ENCODE measurements at regions of chr7 and their contacts with region 1.

Region 1: GRCh38 chr7:107743567-107744344 is at the start of gene CBLL1:
- DNase-seq: peak; percentile 91
- ATAC-seq: peak; percentile 97
- H3K4me3 ChIP-seq: peak within 1 kb of the TSS; percentile 86 to 92 (median 87)
- H3K27ac ChIP-seq: peak within 1 kb of the TSS; percentile 98
- H3K4me1 ChIP-seq: peaks cover 37% of the 10 kb centered on the region
- H3K27me3 ChIP-seq: no peaks in the 10 kb centered on the region; a peak in 1 of 5 replicates
- CTCF ChIP-seq: peak; percentile 95
- EP300 ChIP-seq: no peak
- POLR2A ChIP-seq: peak; percentile 83
- RAD21 ChIP-seq: peak; percentile 95
- total RNA-seq, gene CBLL1: 10.5 and 12.2 TPM in 2 replicates

Region 2: GRCh38 chr7:107551936-107552335 is 191.8 kb before region 1 on chr7:
- CTCF ChIA-PET with region 1: no interaction called
- POLR2A ChIA-PET with region 1: no interaction called
- in situ Hi-C with region 1: no loop called
- intact Hi-C with region 1: no loop called
- DNase-seq: no peak
- ATAC-seq: no peak
- H3K4me3 ChIP-seq: no peak overlapping the region
- H3K27ac ChIP-seq: no peak overlapping the region
- H3K4me1 ChIP-seq: no peaks in the 10 kb centered on the region
- H3K27me3 ChIP-seq: no peaks in the 10 kb centered on the region
- CTCF ChIP-seq: no peak
- EP300 ChIP-seq: no peak
- POLR2A ChIP-seq: no peak
- RAD21 ChIP-seq: no peak

Region 3: GRCh38 chr7:107643407-107643806 is 100.3 kb before region 1 on chr7:
- CTCF ChIA-PET with region 1: no interaction called
- POLR2A ChIA-PET with region 1: no interaction called
- in situ Hi-C with region 1: no loop called
- intact Hi-C with region 1: no loop called
- DNase-seq: no peak
- ATAC-seq: no peak
- H3K4me3 ChIP-seq: no peak overlapping the region
- H3K27ac ChIP-seq: no peak overlapping the region
- H3K4me1 ChIP-seq: no peaks in the 10 kb centered on the region
- H3K27me3 ChIP-seq: peaks cover 0 to 4% of the 10 kb centered on the region in 2 experiments; a peak in 1 of 5 replicates
- CTCF ChIP-seq: no peak
- EP300 ChIP-seq: no peak
- POLR2A ChIP-seq: no peak
- RAD21 ChIP-seq: no peak

Region 4: GRCh38 chr7:107779647-107780099 is 35.9 kb after region 1 on chr7:
- CTCF ChIA-PET with region 1: no interaction called
- POLR2A ChIA-PET with region 1: interaction called, 8 read pairs
- in situ Hi-C with region 1: no loop called
- intact Hi-C with region 1: loop called (anchors 1 kb)
- DNase-seq: peak; percentile 96
- ATAC-seq: peak; percentile 99
- H3K4me3 ChIP-seq: no peak overlapping the region; a peak in 1 of 6 replicates
- H3K27ac ChIP-seq: peak overlapping the region; percentile 85
- H3K4me1 ChIP-seq: peaks cover 78% of the 10 kb centered on the region
- H3K27me3 ChIP-seq: no peaks in the 10 kb centered on the region
- CTCF ChIP-seq: no peak; the same call in 1 of the 2 replicates
- EP300 ChIP-seq: peak; percentile 66 to 98
- POLR2A ChIP-seq: peak in 1 of 2 experiments; percentile 28; a peak in 1 of 4 replicates
- RAD21 ChIP-seq: 0 out of 2 replicates have a peak, but pooled peaks have one; percentile 10

Region 5: DNA sequence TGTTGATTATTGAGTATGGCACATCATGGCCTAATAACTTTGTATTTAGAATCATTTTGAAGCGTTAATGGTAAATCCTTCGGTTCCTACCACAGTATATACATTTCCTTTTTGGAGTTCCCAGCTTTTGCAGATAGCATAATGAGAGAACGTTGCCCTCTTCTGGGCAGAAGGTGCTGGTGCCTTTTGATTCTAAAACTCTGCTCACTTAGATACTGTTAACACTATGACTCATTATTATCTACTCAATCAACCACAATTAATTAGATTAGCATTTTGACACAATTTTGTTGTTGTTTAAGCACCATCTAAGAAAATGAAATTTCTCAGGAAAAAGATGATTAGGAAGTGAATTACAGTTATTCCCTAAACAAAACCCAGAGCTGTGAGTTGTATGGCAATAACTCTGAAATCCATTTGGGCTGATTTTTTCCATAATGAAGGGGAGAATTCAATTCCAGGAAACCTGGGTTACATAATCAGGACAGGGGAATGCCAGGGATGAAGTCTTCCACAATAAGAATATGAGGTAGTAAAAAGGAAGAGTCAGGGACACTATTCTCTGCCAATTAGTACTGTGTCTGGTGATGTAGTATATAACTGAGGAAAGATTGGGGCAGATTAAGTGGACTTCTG is 135.8 kb after region 1 on chr7:
- CTCF ChIA-PET with region 1: interaction called, 30 read pairs
- POLR2A ChIA-PET with region 1: interaction called, 30 read pairs
- in situ Hi-C with region 1: loop called (anchors 5 kb)
- intact Hi-C with region 1: loop called (anchors 1 kb)
- DNase-seq: peak; percentile 49
- ATAC-seq: peak; percentile 82
- H3K4me3 ChIP-seq: no peak overlapping the region
- H3K27ac ChIP-seq: no peak overlapping the region
- H3K4me1 ChIP-seq: no peaks in the 10 kb centered on the region
- H3K27me3 ChIP-seq: peaks cover 0 to 8% of the 10 kb centered on the region in 2 experiments; a peak in 1 of 5 replicates
- CTCF ChIP-seq: peak; percentile 85
- EP300 ChIP-seq: no peak
- POLR2A ChIP-seq: no peak
- RAD21 ChIP-seq: peak; percentile 62; the same call in 1 of the 2 replicates

Region 6: DNA sequence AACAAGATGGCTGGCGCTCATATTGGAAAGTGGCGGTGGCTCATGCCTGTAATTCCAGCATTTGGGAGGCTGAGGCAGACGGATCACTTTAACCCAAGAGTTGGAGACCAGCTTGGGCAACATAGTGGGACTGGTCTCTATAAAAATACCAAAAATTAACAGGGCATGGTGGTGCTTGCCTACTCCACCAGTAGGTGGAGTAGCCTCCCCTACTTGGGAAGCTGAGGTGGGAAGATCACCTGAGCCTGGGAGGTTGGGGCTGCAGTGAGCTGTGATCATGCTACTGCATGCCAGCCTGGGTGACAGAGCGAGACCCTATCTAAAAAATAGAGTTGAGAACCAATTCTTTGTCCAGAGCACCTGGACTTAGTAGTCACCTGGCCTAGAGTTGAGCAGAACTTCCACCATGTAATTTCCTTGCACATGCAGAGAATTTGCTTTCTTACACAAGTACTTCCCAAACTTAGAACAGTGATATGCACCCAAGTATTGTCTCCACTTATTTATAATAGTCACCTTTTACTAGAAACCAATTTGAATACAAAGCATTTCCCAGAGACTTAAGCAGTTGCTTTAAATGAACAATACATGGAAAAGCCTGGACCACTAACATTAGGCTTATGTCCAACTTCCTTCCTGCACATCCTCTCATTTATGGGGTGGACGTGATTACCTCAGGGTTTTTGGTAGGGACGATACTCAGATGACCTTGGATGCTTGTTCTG is 370.5 kb after region 1 on chr7:
- CTCF ChIA-PET with region 1: no interaction called
- POLR2A ChIA-PET with region 1: no interaction called
- in situ Hi-C with region 1: loop called (anchors 25 kb)
- intact Hi-C with region 1: no loop called
- DNase-seq: peak; percentile 31
- ATAC-seq: peak; percentile 95
- H3K4me3 ChIP-seq: no peak overlapping the region
- H3K27ac ChIP-seq: no peak overlapping the region
- H3K4me1 ChIP-seq: peaks cover 4% of the 10 kb centered on the region; the same call in 1 of the 2 replicates
- H3K27me3 ChIP-seq: no peaks in the 10 kb centered on the region; a peak in 2 of 5 replicates
- CTCF ChIP-seq: peak; percentile 67
- EP300 ChIP-seq: no peak
- POLR2A ChIP-seq: no peak
- RAD21 ChIP-seq: peak; percentile 48; the same call in 1 of the 2 replicates

Region 7: DNA sequence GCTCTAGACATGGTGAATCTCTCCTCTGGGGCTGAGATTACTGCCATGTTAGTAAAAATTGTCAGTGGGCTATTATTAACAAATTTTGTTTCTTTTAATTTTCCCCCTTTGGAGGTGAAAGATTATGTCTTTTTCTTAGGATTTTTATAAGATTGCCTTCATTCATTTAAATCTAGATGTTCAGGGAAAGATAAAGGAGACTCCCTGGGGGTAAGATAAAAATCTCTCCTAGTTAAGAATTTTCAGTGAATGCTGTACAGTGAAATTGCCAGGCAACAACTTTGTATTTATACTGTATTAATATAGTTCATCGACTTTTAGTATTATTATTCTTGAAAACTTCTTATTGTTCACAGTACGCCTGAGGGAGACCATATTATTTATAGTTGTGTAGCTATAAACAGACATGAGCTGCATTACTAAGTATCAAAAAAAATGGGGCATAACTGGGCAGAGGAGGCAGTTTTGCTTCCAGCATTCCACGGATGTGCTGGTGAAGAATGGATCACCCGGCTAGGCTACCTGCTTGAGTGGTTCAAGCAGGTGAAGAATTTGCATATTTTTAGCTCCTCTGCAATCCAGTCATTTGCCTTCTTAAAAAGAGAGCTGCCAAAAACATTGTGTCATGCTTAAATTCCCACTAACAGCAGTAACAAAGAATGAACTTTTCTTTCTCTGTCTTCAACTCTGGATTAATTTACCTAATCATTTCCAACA is 1378.0 kb after region 1 on chr7:
- CTCF ChIA-PET with region 1: no interaction called
- POLR2A ChIA-PET with region 1: no interaction called
- in situ Hi-C with region 1: no loop called
- intact Hi-C with region 1: no loop called
- DNase-seq: no peak
- ATAC-seq: no peak
- H3K4me3 ChIP-seq: no peak overlapping the region
- H3K27ac ChIP-seq: no peak overlapping the region
- H3K4me1 ChIP-seq: no peaks in the 10 kb centered on the region
- H3K27me3 ChIP-seq: no peaks in the 10 kb centered on the region
- CTCF ChIP-seq: no peak
- EP300 ChIP-seq: no peak
- POLR2A ChIP-seq: no peak
- RAD21 ChIP-seq: no peak

Measured in HepG2 (cell line).